Activated B cell treated with CpG ODN at 0.5 μM for 24 hours (primary cell): ENCODE measurements at regions of chr3 and their contacts with region 1.

Region 1: DNA sequence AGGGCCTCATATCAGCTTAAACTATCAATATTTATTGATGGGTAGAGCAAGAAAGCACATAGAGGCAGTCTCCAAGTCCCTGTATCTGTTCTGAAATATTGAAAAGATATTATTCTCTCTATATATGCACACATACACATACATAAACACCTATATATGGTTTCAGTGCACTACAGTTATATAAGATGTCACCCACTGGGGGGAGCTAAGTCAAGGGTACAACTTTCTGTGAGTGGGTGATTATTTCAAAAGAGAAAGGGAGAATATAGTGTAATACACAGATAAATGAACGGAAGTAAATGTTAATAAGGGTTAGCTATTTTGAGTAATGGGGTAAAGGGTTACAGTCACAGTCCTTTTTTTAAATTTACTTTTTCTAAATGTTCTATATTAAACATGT is 8.8 kb downstream of the SNTN start:
- DNase-seq: no peak
- ATAC-seq: no peak
- H3K4me3 Mint-ChIP-seq: no peak overlapping the region
- H3K27ac Mint-ChIP-seq: no peak overlapping the region
- H3K4me1 Mint-ChIP-seq: no peaks in the 10 kb centered on the region
- H3K27me3 Mint-ChIP-seq: no peaks in the 10 kb centered on the region
- CTCF ChIP-seq: no peak

Region 2: GRCh38 chr3:63349583-63350521 is 311.4 kb before region 1 on chr3:
- CTCF ChIA-PET with region 1: no interaction called
- POLR2A ChIA-PET with region 1: no interaction called
- intact Hi-C with region 1: loop called (anchors 5 kb)
- DNase-seq: no peak
- ATAC-seq: no peak
- H3K4me3 Mint-ChIP-seq: no peak overlapping the region
- H3K27ac Mint-ChIP-seq: no peak overlapping the region
- H3K4me1 Mint-ChIP-seq: no peaks in the 10 kb centered on the region
- H3K27me3 Mint-ChIP-seq: peaks cover 16% of the 10 kb centered on the region
- CTCF ChIP-seq: no peak